ENCODE measurements at regions of chr3 and their contacts with region 1.

Region 1: GRCh38 chr3:176896640-176897039 is 300.6 kb downstream of the TBL1XR1 start:
- DNase-seq: no peak

Region 2: GRCh38 chr3:176328198-176328597 is 568.4 kb before region 1 on chr3:
- intact Hi-C with region 1: loop called in 1 of 2 experiments (anchors 5 kb)
- DNase-seq: no peak

Region 3: DNA sequence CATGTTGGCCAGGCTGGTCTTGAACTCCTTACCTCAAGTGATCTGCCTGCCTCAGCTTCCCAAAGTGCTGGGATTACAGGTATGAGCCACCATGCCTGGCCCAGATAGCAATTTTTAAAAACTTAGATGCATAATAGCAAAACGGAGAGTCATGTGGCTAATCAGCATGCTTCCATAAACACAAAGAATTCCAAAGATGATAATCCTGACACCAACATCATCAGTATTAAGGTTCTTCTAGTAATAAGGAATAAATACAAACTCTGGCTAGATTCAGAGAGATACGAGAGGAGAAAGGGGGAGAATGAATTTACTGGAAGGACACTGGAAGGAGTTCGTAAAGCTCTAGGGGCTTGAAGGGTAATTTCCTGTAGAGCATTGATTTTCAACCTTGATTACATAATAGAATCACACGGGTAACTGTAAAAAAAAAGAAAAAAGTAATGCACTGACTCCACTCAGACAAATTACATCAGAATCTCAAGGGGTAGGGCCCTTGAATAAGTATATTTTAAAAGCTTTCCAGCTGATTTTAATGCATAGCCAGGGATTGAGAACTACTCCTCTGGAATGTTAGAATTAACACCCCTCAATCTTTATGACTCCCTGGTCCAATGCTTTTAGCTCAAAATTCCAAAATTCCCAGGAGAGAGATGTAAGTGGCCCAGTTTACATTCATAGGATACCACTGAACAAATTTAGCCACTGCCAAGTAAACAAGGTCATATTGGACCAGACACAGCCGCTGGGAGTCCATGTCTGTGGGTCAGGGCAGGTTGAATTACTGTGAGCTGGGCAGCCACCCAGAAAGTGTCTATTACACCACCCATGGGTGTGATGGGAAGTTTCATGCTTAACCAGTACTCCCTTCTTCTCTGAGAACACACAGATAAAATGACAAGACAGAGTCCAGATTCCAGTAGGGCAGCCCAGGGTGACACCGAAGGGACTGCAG is 56.7 kb after region 1 on chr3:
- intact Hi-C with region 1: no loop called
- DNase-seq: no peak